Gastrocnemius medialis (tissue), 4 donors: ENCODE measurements at regions of chr17 and their contacts with region 1.

Region 1: DNA sequence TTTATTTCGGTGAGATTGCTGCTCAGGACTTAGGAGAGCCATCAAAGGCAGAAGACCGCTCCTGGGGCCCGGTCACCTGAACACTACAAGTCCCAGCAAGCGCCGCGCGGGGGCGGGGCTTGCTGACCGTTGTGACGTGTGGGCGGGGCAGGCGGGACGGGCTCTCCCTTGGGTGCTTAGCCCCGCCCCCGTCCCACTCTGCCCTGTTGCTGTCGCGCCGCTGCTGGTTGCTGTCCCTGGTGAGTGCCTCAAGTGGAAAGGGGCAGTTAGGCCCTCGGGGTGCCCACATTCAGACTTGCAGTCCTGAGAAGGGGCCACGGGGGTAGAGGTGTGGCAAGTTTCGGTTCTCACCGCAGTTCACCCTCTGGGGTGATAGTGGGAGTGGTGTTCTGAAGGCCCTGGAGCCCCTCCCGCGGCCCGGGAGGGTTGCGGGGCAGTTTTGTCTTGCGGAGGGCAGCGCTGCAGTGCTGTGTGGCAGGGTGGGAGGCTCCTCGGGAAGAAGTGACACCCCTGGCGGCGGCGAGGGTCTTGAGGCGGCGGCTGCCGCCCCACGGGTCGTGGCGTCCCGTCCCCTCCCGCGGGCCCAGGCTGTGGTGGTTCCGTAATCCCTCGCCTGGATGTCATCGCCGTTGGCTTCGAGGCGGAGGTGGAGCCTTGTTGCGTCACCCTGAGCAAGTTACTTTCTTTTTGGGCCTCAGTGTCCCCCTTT is at the start of gene CALCOCO2:
- DNase-seq: peak; percentile 93 to 94
- ATAC-seq: peak; percentile 93 to 95
- H3K4me3 ChIP-seq: peak within 1 kb of the TSS; percentile 90 to 95 (median 92)
- H3K27ac ChIP-seq: peak within 1 kb of the TSS; percentile 98 to 99 (median 98)
- H3K4me1 ChIP-seq: peaks cover 43 to 47% of the 10 kb centered on the region in 2 donors
- H3K27me3 ChIP-seq: no peaks in the 10 kb centered on the region
- CTCF ChIP-seq: peak in 4 of 5 experiments; percentile 9 to 13 (median 10)
- POLR2A ChIP-seq: peak; percentile 93 to 96
- total RNA-seq, gene CALCOCO2: 104 to 237 (median 132) TPM

Region 2: DNA sequence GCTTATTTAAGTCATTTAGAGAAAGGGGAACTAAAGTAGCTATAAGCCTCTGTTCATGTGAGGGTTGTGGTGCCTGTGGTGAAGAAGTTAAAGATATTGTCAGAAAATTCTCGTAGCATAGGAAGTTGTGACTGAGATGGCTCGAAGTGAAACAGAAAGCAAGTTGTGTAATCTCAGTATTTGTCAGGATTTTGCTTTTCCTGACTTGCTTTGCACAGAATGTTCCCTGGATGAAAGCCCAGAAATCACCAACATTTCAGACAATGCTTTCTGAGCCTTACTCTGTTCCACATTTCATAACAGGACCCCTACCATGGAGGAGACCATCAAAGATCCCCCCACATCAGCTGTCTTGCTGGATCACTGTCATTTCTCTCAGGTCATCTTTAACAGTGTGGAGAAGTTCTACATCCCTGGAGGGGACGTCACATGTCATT is 10.4 kb after region 1 on chr17:
- in situ Hi-C with region 1: no loop called
- intact Hi-C with region 1: loop called (anchors 1 kb)
- DNase-seq: peak in 1 of 2 donors; percentile 49
- ATAC-seq: peak; percentile 74 to 76
- H3K4me3 ChIP-seq: peak overlapping the region; percentile 33 to 49 (median 46)
- H3K27ac ChIP-seq: peak overlapping the region; percentile 78 to 91 (median 86)
- H3K4me1 ChIP-seq: peaks cover 53 to 65% of the 10 kb centered on the region in 2 donors
- H3K27me3 ChIP-seq: no peaks in the 10 kb centered on the region
- CTCF ChIP-seq: no peak
- POLR2A ChIP-seq: peak in 1 of 2 donors; percentile 58

Region 3: GRCh38 chr17:48981927-48982539 is 151.0 kb after region 1 on chr17:
- in situ Hi-C with region 1: no loop called
- intact Hi-C with region 1: no loop called
- DNase-seq: no peak
- ATAC-seq: no peak
- H3K4me3 ChIP-seq: no peak overlapping the region
- H3K27ac ChIP-seq: no peak overlapping the region
- H3K4me1 ChIP-seq: no peaks in the 10 kb centered on the region
- H3K27me3 ChIP-seq: peaks cover 19 to 43% (median 34%) of the 10 kb centered on the region in 3 donors
- CTCF ChIP-seq: no peak
- POLR2A ChIP-seq: no peak

Region 4: DNA sequence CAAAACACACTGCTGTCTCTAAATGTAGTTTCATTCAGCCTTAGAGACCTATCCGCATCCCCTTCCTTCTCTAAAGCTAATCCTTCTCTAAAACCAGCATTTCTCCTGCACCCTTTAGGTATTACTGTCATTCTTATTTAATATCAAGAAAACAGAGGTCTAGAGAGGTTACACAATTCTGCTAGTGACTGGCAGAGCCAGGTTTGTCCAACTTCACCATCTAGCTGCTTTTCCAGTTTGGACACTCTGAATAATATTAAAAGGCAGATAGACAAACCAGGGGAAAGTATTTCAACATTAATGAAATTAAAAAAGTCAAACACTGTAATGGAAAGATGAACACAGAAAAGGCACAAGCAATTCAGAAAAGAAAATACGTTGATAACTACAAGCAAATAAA is 474.9 kb after region 1 on chr17:
- in situ Hi-C with region 1: no loop called
- intact Hi-C with region 1: no loop called
- DNase-seq: no peak
- ATAC-seq: no peak
- H3K4me3 ChIP-seq: no peak overlapping the region
- H3K27ac ChIP-seq: no peak overlapping the region
- H3K4me1 ChIP-seq: no peaks in the 10 kb centered on the region
- H3K27me3 ChIP-seq: no peaks in the 10 kb centered on the region
- CTCF ChIP-seq: no peak
- POLR2A ChIP-seq: no peak